ENCODE measurements at regions of chr13 and their contacts with region 1.

Region 1: GRCh38 chr13:31733066-31733465 is 6.3 kb upstream of the RXFP2 start:
- DNase-seq: no peak
- H3K4me3 ChIP-seq: no peak overlapping the region
- H3K27ac ChIP-seq: no peak overlapping the region
- H3K4me1 ChIP-seq: no peaks in the 10 kb centered on the region
- H3K27me3 ChIP-seq: no peaks in the 10 kb centered on the region
- CTCF ChIP-seq: no peak

Region 2: GRCh38 chr13:31431722-31432137 is 301.3 kb before region 1 on chr13:
- intact Hi-C with region 1: loop called (anchors 10 kb)
- DNase-seq: peak in 3 of 5 donors; percentile 37 to 53 (median 53)
- H3K4me3 ChIP-seq: no peak overlapping the region
- H3K27ac ChIP-seq: no peak overlapping the region
- H3K4me1 ChIP-seq: peaks cover 0 to 4% (median 2%) of the 10 kb centered on the region in 3 donors
- H3K27me3 ChIP-seq: no peaks in the 10 kb centered on the region
- CTCF ChIP-seq: peak; percentile 73

Measured in kidney (tissue), 22 donors.